Sciatic nerve (tissue), 2 donors: ENCODE measurements at regions of chr1 and their contacts with region 1.

Region 1: DNA sequence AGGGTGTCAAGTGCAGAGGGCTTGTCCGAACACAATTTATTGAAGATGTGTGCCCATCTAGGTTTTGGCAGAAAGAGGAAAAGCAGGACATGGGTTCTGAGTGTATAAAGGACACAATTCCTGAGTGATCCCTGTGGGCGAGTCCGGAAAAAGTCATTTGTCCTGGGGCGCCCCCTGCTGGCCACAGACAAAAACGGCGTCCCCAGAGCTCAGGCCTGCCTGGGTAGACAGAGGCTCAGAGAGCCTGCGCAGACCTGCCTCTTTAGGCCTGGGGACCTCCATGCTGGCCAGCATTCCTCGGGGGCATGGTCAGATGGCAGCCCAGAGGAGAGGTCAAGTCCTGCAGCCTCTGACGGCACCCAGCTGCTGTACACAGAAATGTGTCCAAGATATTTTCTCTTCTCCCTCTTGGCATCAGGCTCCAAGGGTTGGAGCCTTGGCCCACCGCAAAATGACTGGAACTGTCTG is 65.5 kb upstream of the LRP8 start:
- DNase-seq: peak; percentile 89
- ATAC-seq: peak; percentile 90

Region 2: GRCh38 chr1:53278201-53278725 is 115.1 kb before region 1 on chr1:
- intact Hi-C with region 1: loop called (anchors 2 kb)
- DNase-seq: peak; percentile 82
- ATAC-seq: peak; percentile 72

Region 3: DNA sequence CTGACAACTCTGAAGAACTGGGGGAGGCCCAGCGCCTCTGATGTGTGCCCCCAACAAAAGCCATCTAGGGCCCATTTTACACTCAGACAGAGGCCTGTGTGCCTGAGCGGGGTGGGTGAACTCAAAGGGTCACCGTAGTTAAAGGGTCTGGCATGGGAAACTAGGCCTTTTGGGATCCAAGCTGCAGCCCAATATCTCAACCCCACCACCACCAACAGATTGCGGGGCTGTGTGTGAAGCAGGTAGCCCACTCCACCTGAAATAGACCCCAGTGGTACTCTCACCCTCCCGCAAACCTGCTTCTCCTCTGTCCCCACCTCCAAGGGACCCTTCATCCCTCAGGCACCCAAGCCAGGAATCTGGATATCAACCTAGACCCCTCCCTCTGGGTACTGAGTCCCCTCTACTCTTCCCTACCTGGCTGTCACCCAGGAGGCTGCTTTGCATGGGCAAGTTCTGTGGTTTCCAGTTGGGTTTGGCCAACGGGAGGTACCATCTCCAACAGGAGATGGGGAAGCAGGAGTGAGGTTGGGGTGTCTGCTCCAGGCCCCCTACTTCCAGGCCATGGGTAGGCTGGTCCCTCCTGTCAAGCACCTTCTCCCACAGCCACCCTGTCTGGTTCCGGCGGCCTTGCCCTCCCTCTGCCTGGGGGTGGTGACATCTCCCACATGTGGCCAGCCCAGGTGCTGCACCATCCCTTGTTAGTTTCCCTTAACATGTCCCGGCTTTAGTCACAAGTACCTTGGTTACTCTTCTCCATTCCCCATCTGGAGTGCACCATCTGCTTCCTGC is 30.3 kb before region 1 on chr1:
- intact Hi-C with region 1: no loop called
- DNase-seq: peak; percentile 36
- ATAC-seq: no peak